ENCODE measurements at regions of chr13 and their contacts with region 1.

Region 1: DNA sequence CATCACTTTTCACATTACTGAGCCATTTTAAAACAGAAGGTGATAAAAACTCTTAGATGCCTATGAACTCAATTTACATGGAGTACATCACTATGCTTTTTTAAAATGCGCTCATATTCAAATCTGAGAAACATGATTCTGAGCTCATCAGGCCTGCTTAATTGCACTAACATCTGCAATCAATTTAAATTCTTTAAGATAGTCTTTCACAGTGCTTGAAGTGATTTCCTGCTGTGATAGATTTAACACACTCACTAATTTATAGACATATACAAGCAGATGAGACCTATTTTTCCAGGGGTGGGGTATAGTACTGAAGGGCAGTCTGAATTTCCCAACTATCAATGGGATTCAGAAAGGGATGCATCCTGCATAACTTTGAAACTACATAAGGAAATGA is 82.9 kb downstream of the DIAPH3 start:
- DNase-seq: peak; percentile 93
- H3K4me3 ChIP-seq: no peak overlapping the region
- H3K27ac ChIP-seq: peak overlapping the region; percentile 86
- H3K4me1 ChIP-seq: peaks cover 43% of the 10 kb centered on the region
- H3K27me3 ChIP-seq: no peaks in the 10 kb centered on the region
- CTCF ChIP-seq: no peak

Region 2: GRCh38 chr13:59391696-59392095 is 689.2 kb before region 1 on chr13:
- CTCF ChIA-PET with region 1: no interaction called
- POLR2A ChIA-PET with region 1: no interaction called
- intact Hi-C with region 1: no loop called
- DNase-seq: peak; percentile 91
- H3K4me3 ChIP-seq: no peak overlapping the region
- H3K27ac ChIP-seq: peak overlapping the region; percentile 58
- H3K4me1 ChIP-seq: peaks cover 23% of the 10 kb centered on the region
- H3K27me3 ChIP-seq: no peaks in the 10 kb centered on the region
- CTCF ChIP-seq: peak; percentile 93

Region 3: DNA sequence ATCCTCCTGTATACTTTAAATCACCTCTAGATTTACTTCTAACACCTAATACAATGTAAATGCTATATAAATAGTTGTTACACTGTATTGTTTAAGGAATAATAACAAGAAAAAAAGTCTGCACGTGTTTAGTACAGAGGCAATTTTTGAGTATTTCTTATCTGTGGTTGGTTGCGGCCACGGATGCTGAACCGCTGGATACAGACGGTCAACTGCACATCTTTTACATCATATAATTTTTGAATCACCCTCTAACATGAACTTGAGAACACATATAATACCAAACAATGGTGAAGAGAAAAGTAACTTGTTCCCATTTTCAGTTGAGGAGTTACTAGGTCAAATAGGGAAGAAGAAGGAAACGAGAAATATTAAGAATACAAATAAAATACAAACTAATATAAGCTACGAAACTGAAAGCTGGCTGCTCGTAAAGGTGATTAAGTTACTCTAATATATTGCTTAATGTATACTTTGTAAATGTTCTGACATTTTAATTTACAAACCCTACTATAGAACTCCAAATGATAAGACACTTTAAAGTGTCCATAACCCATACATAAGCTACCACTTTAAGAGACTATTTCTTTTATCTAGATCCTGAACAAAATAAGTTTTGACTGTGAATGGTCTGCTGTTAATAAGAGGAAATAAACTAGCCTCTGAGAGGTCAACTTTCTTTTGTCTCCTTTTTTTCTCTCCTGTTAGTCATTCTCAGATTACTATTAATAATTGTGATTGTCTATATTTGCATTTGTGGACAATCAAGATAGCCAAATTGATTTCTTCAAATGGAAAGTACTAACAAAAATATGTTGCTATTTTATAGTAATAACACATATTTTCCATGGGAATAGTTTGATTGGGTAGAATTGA is 374.5 kb before region 1 on chr13:
- CTCF ChIA-PET with region 1: no interaction called
- POLR2A ChIA-PET with region 1: no interaction called
- intact Hi-C with region 1: no loop called
- DNase-seq: no peak
- H3K4me3 ChIP-seq: no peak overlapping the region
- H3K27ac ChIP-seq: no peak overlapping the region
- H3K4me1 ChIP-seq: peaks cover 5% of the 10 kb centered on the region
- H3K27me3 ChIP-seq: no peaks in the 10 kb centered on the region
- CTCF ChIP-seq: no peak

Region 4: GRCh38 chr13:59801107-59801880 is 279.6 kb before region 1 on chr13:
- CTCF ChIA-PET with region 1: no interaction called
- POLR2A ChIA-PET with region 1: no interaction called
- intact Hi-C with region 1: no loop called
- DNase-seq: peak; percentile 73
- H3K4me3 ChIP-seq: no peak overlapping the region
- H3K27ac ChIP-seq: peak overlapping the region; percentile 11
- H3K4me1 ChIP-seq: peaks cover 17% of the 10 kb centered on the region
- H3K27me3 ChIP-seq: no peaks in the 10 kb centered on the region
- CTCF ChIP-seq: no peak

Region 5: GRCh38 chr13:59979589-59979988 is 101.3 kb before region 1 on chr13:
- CTCF ChIA-PET with region 1: no interaction called
- POLR2A ChIA-PET with region 1: no interaction called
- intact Hi-C with region 1: loop called (anchors 5 kb)
- DNase-seq: no peak
- H3K4me3 ChIP-seq: no peak overlapping the region
- H3K27ac ChIP-seq: no peak overlapping the region
- H3K4me1 ChIP-seq: peaks cover 34% of the 10 kb centered on the region
- H3K27me3 ChIP-seq: no peaks in the 10 kb centered on the region
- CTCF ChIP-seq: no peak